CD4-positive, alpha-beta T cell (primary cell): ENCODE measurements at regions of chr3 and their contacts with region 1.

Region 1: GRCh38 chr3:125916376-125916978 is 52.5 kb upstream of the ROPN1B start:
- DNase-seq: peak in 12 of 14 experiments; percentile 93 to 98 (median 96)
- ATAC-seq: peak; percentile 89
- H3K4me3 ChIP-seq: peak overlapping the region; percentile 72
- H3K4me3 Mint-ChIP-seq: peak overlapping the region; percentile 91
- H3K27ac ChIP-seq: peak overlapping the region; percentile 50 to 87
- H3K27ac Mint-ChIP-seq: peak overlapping the region; percentile 95
- H3K4me1 ChIP-seq: peaks cover 12% of the 10 kb centered on the region
- H3K4me1 Mint-ChIP-seq: peaks cover 12% of the 10 kb centered on the region
- H3K27me3 ChIP-seq: no peaks in the 10 kb centered on the region
- H3K27me3 Mint-ChIP-seq: no peaks in the 10 kb centered on the region
- CTCF ChIP-seq: no peak

Region 2: DNA sequence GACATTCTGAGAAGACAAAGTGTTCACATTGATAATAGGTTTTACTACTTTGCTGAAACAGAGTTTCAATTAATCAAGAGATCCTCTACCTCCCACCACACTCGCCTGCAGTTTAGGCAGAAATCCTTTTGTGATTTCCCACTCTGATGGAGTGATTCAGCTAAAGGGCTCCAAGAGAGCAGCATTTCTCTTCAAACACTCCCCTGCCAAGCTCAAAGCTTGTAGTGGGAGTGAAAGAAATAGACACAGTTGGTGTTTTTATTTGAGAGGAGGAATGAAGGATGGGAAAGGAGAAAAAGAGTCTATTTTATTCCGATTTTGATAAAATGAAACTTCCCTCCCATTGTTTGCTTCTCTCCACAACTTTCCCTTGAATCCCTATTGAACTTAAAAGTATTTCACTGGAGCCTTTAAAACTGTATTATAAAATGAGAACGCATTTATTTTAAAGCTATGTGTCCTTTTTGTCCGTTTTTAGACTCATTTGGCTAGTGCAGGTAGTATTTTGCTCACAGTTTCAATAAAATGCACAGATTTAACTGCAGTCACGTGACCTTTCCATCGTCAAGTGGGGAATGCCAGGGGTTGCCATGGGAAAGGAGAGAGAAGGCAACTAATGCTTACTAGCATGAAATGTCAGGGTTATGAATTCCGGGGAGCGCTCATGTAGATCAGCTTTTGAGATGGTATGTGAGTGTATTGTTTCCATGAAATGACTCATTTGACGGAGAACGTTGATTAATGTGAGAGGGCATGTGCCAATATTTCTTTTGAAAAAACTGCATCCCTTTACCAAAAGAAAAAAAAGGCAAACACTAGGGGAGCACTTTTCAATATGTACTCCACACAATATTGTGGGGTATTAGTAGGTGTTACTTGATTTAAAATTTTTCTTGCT is 313.5 kb before region 1 on chr3:
- CTCF ChIA-PET with region 1: no interaction called
- POLR2A ChIA-PET with region 1: no interaction called
- intact Hi-C with region 1: loop called in 1 of 2 experiments (anchors 5 kb)
- DNase-seq: no peak
- ATAC-seq: no peak
- H3K4me3 ChIP-seq: no peak overlapping the region
- H3K4me3 Mint-ChIP-seq: no peak overlapping the region
- H3K27ac ChIP-seq: no peak overlapping the region
- H3K27ac Mint-ChIP-seq: no peak overlapping the region
- H3K4me1 ChIP-seq: no peaks in the 10 kb centered on the region
- H3K4me1 Mint-ChIP-seq: no peaks in the 10 kb centered on the region
- H3K27me3 ChIP-seq: no peaks in the 10 kb centered on the region
- H3K27me3 Mint-ChIP-seq: no peaks in the 10 kb centered on the region
- CTCF ChIP-seq: no peak

Region 3: GRCh38 chr3:125967138-125967537 is 50.7 kb after region 1 on chr3:
- CTCF ChIA-PET with region 1: no interaction called
- POLR2A ChIA-PET with region 1: no interaction called
- intact Hi-C with region 1: loop called in 1 of 2 experiments (anchors 5 kb)
- DNase-seq: no peak
- ATAC-seq: no peak
- H3K4me3 ChIP-seq: no peak overlapping the region
- H3K4me3 Mint-ChIP-seq: no peak overlapping the region
- H3K27ac ChIP-seq: no peak overlapping the region
- H3K27ac Mint-ChIP-seq: no peak overlapping the region
- H3K4me1 ChIP-seq: peaks cover 5% of the 10 kb centered on the region
- H3K4me1 Mint-ChIP-seq: peaks cover 3% of the 10 kb centered on the region
- H3K27me3 ChIP-seq: peaks cover 25 to 33% of the 10 kb centered on the region in 2 experiments
- H3K27me3 Mint-ChIP-seq: peaks cover 25% of the 10 kb centered on the region
- CTCF ChIP-seq: no peak

Region 4: GRCh38 chr3:126083913-126084767 is 167.7 kb after region 1 on chr3 and contains the start of gene SLC41A3:
- CTCF ChIA-PET with region 1: no interaction called
- POLR2A ChIA-PET with region 1: interaction called, 4 read pairs
- intact Hi-C with region 1: loop called (anchors 1 to 5 kb)
- DNase-seq: peak; percentile 65 to 88 (median 82)
- ATAC-seq: peak; percentile 86
- H3K4me3 ChIP-seq: peak within 1 kb of the TSS; percentile 70
- H3K4me3 Mint-ChIP-seq: peak within 1 kb of the TSS; percentile 93
- H3K27ac ChIP-seq: peak within 1 kb of the TSS; percentile 33 to 72
- H3K27ac Mint-ChIP-seq: peak within 1 kb of the TSS; percentile 85
- H3K4me1 ChIP-seq: peaks cover 28% of the 10 kb centered on the region
- H3K4me1 Mint-ChIP-seq: peaks cover 30% of the 10 kb centered on the region
- H3K27me3 ChIP-seq: no peaks in the 10 kb centered on the region
- H3K27me3 Mint-ChIP-seq: no peaks in the 10 kb centered on the region
- CTCF ChIP-seq: peak; percentile 82
- total RNA-seq, gene SLC41A3: 26.5 to 29.1 TPM

Region 5: DNA sequence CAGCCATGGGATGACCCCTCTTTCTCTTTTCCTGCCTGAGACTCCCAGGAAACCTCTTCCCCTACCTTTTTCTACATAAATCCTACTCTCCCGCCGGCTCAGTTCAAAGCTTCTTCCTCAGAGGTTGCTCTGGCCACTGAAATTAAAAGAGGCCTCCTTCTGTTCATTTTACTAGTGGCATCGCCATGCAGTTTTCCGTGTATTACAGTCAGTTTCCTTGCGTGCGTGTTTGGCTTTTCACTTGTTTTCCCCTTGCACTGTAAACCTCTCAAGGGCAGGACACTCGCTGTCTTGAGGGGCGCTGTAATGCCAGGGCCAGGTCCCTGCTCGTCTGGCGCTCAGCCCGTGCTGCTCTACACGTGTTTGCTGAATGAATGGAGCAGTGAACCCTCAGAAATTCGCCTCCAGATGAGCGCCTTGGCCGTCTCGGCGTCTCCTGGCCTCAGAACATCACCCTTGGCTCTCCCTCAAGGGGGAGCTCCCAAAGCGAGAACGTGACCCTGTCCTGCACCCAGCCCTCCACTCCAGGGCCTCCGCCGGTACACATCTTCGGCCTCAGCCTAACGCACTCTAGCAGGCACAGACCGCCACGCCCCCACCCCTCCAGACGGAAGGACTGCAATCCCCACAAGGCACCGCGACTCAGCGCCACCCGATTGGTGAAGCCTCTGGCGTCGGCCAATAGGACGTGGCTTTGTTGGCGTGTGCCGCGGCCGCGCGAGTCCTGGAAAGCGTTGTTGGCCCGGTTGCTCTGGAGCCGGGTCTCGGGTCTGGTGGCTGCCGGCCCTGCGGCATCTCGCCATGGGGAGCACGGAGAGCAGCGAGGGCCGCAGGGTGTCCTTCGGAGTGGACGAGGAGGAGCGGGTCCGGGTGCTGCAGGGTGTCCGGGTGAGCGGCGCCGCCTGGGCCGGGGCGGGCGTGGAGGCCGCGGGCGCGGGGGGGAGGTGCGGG is 787.3 kb after region 1 on chr3 and contains the start of gene CHCHD6:
- CTCF ChIA-PET with region 1: no interaction called
- POLR2A ChIA-PET with region 1: no interaction called
- intact Hi-C with region 1: loop called in 1 of 2 experiments (anchors 10 kb)
- DNase-seq: peak; percentile 93 to 98 (median 96)
- ATAC-seq: peak; percentile 94
- H3K4me3 ChIP-seq: peak within 1 kb of the TSS; percentile 81
- H3K4me3 Mint-ChIP-seq: peak within 1 kb of the TSS; percentile 98
- H3K27ac ChIP-seq: no peak within 1 kb of the TSS
- H3K27ac Mint-ChIP-seq: peak within 1 kb of the TSS; percentile 70
- H3K4me1 ChIP-seq: peaks cover 19% of the 10 kb centered on the region
- H3K4me1 Mint-ChIP-seq: peaks cover 31% of the 10 kb centered on the region
- H3K27me3 ChIP-seq: peaks cover 0 to 4% of the 10 kb centered on the region in 2 experiments
- H3K27me3 Mint-ChIP-seq: peaks cover 21% of the 10 kb centered on the region
- CTCF ChIP-seq: peak; percentile 25
- total RNA-seq, gene CHCHD6: 8.7 to 9.3 TPM